ENCODE measurements at regions of chr9 and their contacts with region 1.

Region 1: GRCh38 chr9:98491828-98492227 is 216.9 kb downstream of the GABBR2 start:
- DNase-seq: no peak
- ATAC-seq: no peak
- H3K4me3 ChIP-seq: no peak overlapping the region
- H3K27ac ChIP-seq: no peak overlapping the region
- H3K4me1 ChIP-seq: peaks cover 0 to 7% of the 10 kb centered on the region in 2 donors
- H3K27me3 ChIP-seq: no peaks in the 10 kb centered on the region
- CTCF ChIP-seq: no peak
- POLR2A ChIP-seq: no peak

Region 2: GRCh38 chr9:98539954-98540353 is 48.1 kb after region 1 on chr9:
- in situ Hi-C with region 1: no loop called
- intact Hi-C with region 1: loop called (anchors 5 kb)
- DNase-seq: no peak
- ATAC-seq: no peak
- H3K4me3 ChIP-seq: no peak overlapping the region
- H3K27ac ChIP-seq: no peak overlapping the region
- H3K4me1 ChIP-seq: no peaks in the 10 kb centered on the region
- H3K27me3 ChIP-seq: no peaks in the 10 kb centered on the region
- CTCF ChIP-seq: no peak
- POLR2A ChIP-seq: no peak

Region 3: GRCh38 chr9:98551511-98552286 is 59.9 kb after region 1 on chr9:
- in situ Hi-C with region 1: no loop called
- intact Hi-C with region 1: no loop called
- DNase-seq: no peak
- ATAC-seq: no peak
- H3K4me3 ChIP-seq: no peak overlapping the region
- H3K27ac ChIP-seq: no peak overlapping the region
- H3K4me1 ChIP-seq: no peaks in the 10 kb centered on the region
- H3K27me3 ChIP-seq: no peaks in the 10 kb centered on the region
- CTCF ChIP-seq: no peak
- POLR2A ChIP-seq: no peak